GM18951 (cell line): ENCODE measurements at regions of chr1 and their contacts with region 1.

Region 1: GRCh38 chr1:40143891-40144575 is 17.2 kb upstream of the RLF start:
- POLR2A ChIP-seq: no peak

Region 2: DNA sequence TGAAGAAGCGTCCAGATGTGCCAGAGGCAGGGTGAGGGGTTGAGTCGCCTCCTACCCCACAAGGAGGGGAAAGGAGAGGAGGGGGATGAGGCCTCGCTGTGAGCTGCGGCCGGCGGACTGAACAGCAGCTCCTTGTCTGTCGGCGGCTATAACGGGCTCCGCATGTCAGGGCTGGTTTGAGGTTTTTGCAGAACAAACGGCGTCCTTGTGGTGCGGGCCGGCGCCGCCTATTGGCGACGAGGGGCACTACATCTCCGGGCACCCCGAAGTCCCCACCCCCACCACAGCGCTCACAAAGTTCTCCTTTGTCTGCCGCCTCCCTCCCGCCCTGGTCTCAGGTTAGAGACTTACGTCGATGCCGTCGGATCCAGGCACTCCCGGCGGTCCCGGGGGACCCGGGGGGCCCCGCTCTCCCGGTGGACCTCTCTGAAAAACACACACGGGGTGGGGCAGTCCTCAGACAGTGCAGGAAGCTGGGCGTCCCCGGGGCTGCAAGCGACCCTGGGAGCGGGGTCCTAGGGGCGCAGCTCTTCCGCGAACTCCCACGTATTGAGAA is 171.3 kb after region 1 on chr1:
- in situ Hi-C with region 1: loop called (anchors 10 kb)
- POLR2A ChIP-seq: peak; percentile 35

Region 3: GRCh38 chr1:41613689-41614574 is 1469.9 kb after region 1 on chr1:
- in situ Hi-C with region 1: no loop called
- POLR2A ChIP-seq: no peak